ENCODE measurements at regions of chr1 and their contacts with region 1.

Region 1: GRCh38 chr1:183821889-183822611 is 17.1 kb downstream of the RGL1 start:
- DNase-seq: no peak
- H3K4me3 ChIP-seq: no peak overlapping the region
- H3K27ac ChIP-seq: no peak overlapping the region
- H3K4me1 ChIP-seq: no peaks in the 10 kb centered on the region
- H3K27me3 ChIP-seq: no peaks in the 10 kb centered on the region
- CTCF ChIP-seq: no peak

Region 2: DNA sequence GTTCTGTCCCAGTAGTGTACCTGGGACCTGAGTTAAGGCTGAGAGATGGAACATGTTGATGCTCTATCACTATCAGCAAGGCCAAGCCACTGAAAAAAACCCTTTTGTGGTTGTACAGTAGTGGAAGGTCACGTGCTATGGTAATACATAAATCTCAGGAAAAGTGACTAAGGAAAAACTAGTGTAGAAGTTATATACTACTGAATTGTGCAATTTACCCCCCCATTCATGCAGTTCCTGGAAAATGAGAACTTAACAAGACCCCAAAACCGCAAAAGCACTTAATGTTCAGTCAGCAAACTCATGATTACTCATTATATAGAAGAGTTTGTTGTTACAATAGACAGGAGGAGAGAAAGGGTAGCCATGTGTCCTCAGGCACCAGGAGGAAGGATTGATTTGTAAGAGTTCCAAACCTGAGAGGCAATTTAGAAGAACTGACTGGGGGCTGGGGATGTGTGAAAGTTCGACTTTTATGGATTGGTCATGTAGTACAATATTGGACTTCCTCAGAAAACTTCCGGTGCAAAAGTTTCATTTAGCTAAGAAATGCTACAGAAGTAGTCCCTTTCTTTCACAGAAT is 74.5 kb after region 1 on chr1:
- CTCF ChIA-PET with region 1: interaction called, 12 read pairs
- dilution Hi-C with region 1: no loop called
- in situ Hi-C with region 1: no loop called
- intact Hi-C with region 1: no loop called
- DNase-seq: peak; percentile 46
- H3K4me3 ChIP-seq: no peak overlapping the region
- H3K27ac ChIP-seq: no peak overlapping the region
- H3K4me1 ChIP-seq: no peaks in the 10 kb centered on the region
- H3K27me3 ChIP-seq: no peaks in the 10 kb centered on the region
- CTCF ChIP-seq: no peak